ENCODE measurements at regions of chr7 and their contacts with region 1.

Region 1: DNA sequence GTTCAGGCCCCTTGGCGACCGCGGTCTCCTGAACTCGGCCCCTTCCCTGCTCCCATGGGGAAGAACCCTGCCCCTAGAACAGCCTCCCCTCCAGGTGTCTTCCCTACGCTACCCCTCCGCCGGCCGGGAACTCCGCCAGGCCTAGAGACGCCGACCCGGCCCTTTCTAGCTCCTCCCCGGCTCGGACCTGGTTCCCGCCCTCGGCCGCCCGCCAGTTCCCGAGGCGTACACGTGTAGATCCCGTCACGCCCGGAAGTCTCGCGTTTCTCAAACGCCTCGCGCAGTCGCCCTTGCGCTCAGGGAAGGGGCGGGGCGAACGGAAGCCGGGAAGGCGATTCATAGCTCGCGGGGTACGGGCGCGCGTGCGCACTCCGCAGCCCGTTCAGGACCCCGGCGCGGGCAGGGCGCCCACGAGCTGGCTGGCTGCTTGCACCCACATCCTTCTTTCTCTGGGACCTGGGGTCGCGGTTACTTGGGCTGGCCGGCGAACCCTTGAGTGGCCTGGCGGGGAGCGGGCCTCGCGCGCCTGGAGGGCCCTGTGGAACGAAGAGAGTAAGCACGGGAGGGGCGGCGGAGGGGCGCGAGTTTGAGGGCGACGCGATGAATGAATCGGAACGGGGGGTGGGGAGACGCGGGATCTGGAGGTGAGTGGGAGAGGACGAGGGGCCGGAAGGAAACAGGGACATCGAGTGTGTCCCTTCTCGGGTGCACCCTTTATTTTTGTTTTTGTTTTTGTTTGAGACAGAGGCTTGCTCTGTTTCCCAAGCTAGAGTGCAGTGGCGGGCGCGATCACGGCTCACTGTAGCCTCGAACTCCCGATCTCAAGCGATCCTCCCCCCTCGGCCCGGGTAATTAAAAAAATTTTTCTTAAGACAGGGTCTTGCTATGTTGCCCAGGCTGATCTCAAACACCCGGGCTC is at the start of gene POP7:
- DNase-seq: peak; percentile 95 to 99 (median 97)
- ATAC-seq: peak; percentile 97
- H3K4me3 ChIP-seq: peak within 1 kb of the TSS; percentile 85
- H3K4me3 Mint-ChIP-seq: peak within 1 kb of the TSS; percentile 88 to 97 (median 95)
- H3K27ac ChIP-seq: peak within 1 kb of the TSS; percentile 91
- H3K27ac Mint-ChIP-seq: peak within 1 kb of the TSS; percentile 88 to 96 (median 93)
- H3K4me1 ChIP-seq: peaks cover 9 to 12% of the 10 kb centered on the region in 2 donors
- H3K4me1 Mint-ChIP-seq: peaks cover 8 to 15% (median 13%) of the 10 kb centered on the region in 7 donors
- H3K27me3 ChIP-seq: no peaks in the 10 kb centered on the region
- H3K27me3 Mint-ChIP-seq: peaks cover 0 to 13% (median 3%) of the 10 kb centered on the region in 5 donors
- total RNA-seq, gene POP7: 8.9 to 38.2 (median 15.0) TPM

Region 2: GRCh38 chr7:100435401-100436304 is 270.4 kb before region 1 on chr7:
- CTCF ChIA-PET with region 1: no interaction called
- POLR2A ChIA-PET with region 1: interaction called, 17 read pairs
- intact Hi-C with region 1: no loop called
- DNase-seq: peak in 7 of 9 donors; percentile 44 to 57 (median 55)
- ATAC-seq: peak; percentile 26
- H3K4me3 ChIP-seq: peak overlapping the region; percentile 89
- H3K4me3 Mint-ChIP-seq: peak overlapping the region; percentile 86 to 100 (median 95)
- H3K27ac ChIP-seq: peak overlapping the region; percentile 98
- H3K27ac Mint-ChIP-seq: peak overlapping the region; percentile 88 to 99 (median 97)
- H3K4me1 ChIP-seq: peaks cover 22 to 36% of the 10 kb centered on the region in 2 donors
- H3K4me1 Mint-ChIP-seq: peaks cover 30 to 52% (median 43%) of the 10 kb centered on the region in 7 donors
- H3K27me3 ChIP-seq: no peaks in the 10 kb centered on the region
- H3K27me3 Mint-ChIP-seq: peaks cover 0 to 4% (median 0%) of the 10 kb centered on the region in 5 donors

Region 3: GRCh38 chr7:100611974-100612729 is 93.9 kb before region 1 on chr7 and contains the start of gene MOSPD3:
- CTCF ChIA-PET with region 1: interaction called, 6 read pairs
- POLR2A ChIA-PET with region 1: interaction called, 11 read pairs
- intact Hi-C with region 1: loop called in 1 of 2 experiments (anchors 1 kb)
- DNase-seq: peak; percentile 97 to 99 (median 98)
- ATAC-seq: peak; percentile 94
- H3K4me3 ChIP-seq: peak within 1 kb of the TSS; percentile 99
- H3K4me3 Mint-ChIP-seq: peak within 1 kb of the TSS; percentile 92 to 99 (median 98)
- H3K27ac ChIP-seq: peak within 1 kb of the TSS; percentile 92
- H3K27ac Mint-ChIP-seq: peak within 1 kb of the TSS; percentile 97 to 100 (median 100)
- H3K4me1 ChIP-seq: peaks cover 10 to 16% of the 10 kb centered on the region in 2 donors
- H3K4me1 Mint-ChIP-seq: peaks cover 18 to 29% (median 24%) of the 10 kb centered on the region in 7 donors
- H3K27me3 ChIP-seq: no peaks in the 10 kb centered on the region
- H3K27me3 Mint-ChIP-seq: peaks cover 0 to 8% (median 0%) of the 10 kb centered on the region in 5 donors
- total RNA-seq, gene MOSPD3: 8.8 to 54.9 (median 13.1) TPM

Region 4: DNA sequence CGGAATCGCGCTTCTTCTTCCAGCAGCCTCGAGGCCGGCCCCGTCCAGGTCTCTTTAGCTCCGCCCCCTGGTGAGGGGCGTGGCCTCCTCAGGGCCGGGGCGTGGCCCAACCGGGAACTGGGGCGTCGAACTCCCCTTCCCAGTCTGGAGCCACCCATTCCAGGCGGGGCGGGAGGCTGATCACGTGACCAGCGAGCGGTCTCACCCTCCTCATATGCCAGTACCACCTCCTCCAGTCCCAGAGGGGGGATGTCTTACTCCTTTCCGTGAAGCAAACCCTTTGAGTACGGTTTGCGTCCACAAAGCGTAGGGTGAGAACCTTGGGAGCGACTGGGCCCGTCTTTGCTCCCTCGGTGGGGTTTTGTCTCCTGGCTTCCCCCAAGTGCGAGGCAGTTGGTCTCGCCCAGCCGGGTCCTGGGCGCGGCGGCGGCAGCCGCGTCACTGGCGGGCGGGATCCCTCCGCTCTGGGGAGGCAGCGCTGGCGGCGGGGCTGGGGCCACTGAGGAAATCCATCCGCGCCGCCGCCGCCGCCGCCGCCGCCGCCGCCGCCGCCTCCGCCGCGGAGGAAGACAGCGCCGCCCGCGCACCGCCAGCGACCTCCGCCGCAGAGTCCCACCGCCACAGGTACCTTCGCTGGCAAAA is 32.6 kb before region 1 on chr7 and contains the start of gene GNB2:
- CTCF ChIA-PET with region 1: interaction called, 11 read pairs
- POLR2A ChIA-PET with region 1: interaction called, 32 read pairs
- intact Hi-C with region 1: loop called (anchors 1 kb)
- DNase-seq: peak; percentile 92 to 100 (median 96)
- ATAC-seq: peak; percentile 75
- H3K4me3 ChIP-seq: peak within 1 kb of the TSS; percentile 82
- H3K4me3 Mint-ChIP-seq: peak within 1 kb of the TSS; percentile 89 to 99 (median 96)
- H3K27ac ChIP-seq: peak within 1 kb of the TSS; percentile 98
- H3K27ac Mint-ChIP-seq: peak within 1 kb of the TSS; percentile 88 to 97 (median 95)
- H3K4me1 ChIP-seq: no peaks in the 10 kb centered on the region
- H3K4me1 Mint-ChIP-seq: peaks cover 9 to 25% (median 15%) of the 10 kb centered on the region in 7 donors
- H3K27me3 ChIP-seq: no peaks in the 10 kb centered on the region
- H3K27me3 Mint-ChIP-seq: peaks cover 0 to 17% (median 0%) of the 10 kb centered on the region in 5 donors
- total RNA-seq, gene GNB2: 98.2 to 215 (median 132) TPM

Region 5: DNA sequence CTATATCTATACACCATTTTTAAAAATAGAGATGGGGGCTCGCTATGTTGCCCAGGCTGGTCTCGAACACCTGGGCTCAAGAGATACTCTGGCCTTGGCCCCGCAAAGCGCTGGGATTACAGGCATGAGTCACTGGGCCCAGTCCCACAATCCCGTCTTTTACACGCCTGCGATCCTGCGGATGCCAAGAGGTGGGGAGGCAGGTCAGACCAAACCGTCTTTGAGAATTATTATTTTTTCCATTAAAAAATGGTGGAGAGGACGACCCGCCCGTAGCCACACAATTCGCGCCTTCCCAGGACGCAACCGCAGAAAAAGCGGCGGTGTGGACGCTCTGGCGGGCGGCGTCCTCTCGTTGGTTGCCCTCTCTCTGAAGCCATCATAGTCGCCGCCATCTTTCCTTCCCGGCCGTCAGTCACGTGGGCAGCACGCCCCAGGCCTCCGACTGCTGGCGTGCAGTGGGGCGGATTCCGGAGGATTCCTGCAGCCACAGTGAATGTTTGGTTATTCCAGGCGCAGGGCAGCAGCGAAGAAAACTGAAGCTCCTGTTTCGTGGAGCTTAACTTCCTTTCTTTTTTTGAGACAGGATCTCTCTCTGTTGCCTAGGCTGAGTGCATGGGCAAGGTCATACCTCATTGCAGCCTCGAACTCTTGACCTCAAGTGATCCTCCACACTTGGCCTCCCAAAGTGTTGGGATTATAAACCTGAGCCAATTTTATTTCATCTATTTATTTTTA is 131.3 kb after region 1 on chr7:
- CTCF ChIA-PET with region 1: no interaction called
- POLR2A ChIA-PET with region 1: no interaction called
- intact Hi-C with region 1: loop called in 1 of 2 experiments (anchors 1 kb)
- DNase-seq: peak; percentile 42 to 65 (median 59)
- ATAC-seq: peak; percentile 97
- H3K4me3 ChIP-seq: peak overlapping the region; percentile 57
- H3K4me3 Mint-ChIP-seq: peak overlapping the region; percentile 80 to 90 (median 86)
- H3K27ac ChIP-seq: peak overlapping the region; percentile 59
- H3K27ac Mint-ChIP-seq: peak overlapping the region; percentile 64 to 92 (median 77)
- H3K4me1 ChIP-seq: no peaks in the 10 kb centered on the region
- H3K4me1 Mint-ChIP-seq: peaks cover 5 to 19% (median 16%) of the 10 kb centered on the region in 7 donors
- H3K27me3 ChIP-seq: no peaks in the 10 kb centered on the region
- H3K27me3 Mint-ChIP-seq: no peaks in the 10 kb centered on the region

Region 6: GRCh38 chr7:101059627-101059942 is 353.6 kb after region 1 on chr7:
- CTCF ChIA-PET with region 1: interaction called, 4 read pairs
- POLR2A ChIA-PET with region 1: no interaction called
- intact Hi-C with region 1: loop called in 1 of 2 experiments (anchors 1 kb)
- DNase-seq: no peak
- ATAC-seq: no peak
- H3K4me3 ChIP-seq: no peak overlapping the region
- H3K4me3 Mint-ChIP-seq: no peak overlapping the region
- H3K27ac ChIP-seq: no peak overlapping the region
- H3K27ac Mint-ChIP-seq: peak overlapping the region in 2 of 9 donors; percentile 11 to 52
- H3K4me1 ChIP-seq: no peaks in the 10 kb centered on the region
- H3K4me1 Mint-ChIP-seq: peaks cover 0 to 5% (median 0%) of the 10 kb centered on the region in 7 donors
- H3K27me3 ChIP-seq: no peaks in the 10 kb centered on the region
- H3K27me3 Mint-ChIP-seq: peaks cover 35 to 69% (median 62%) of the 10 kb centered on the region in 5 donors